ENCODE measurements at regions of chr16 and their contacts with region 1.

Region 1: DNA sequence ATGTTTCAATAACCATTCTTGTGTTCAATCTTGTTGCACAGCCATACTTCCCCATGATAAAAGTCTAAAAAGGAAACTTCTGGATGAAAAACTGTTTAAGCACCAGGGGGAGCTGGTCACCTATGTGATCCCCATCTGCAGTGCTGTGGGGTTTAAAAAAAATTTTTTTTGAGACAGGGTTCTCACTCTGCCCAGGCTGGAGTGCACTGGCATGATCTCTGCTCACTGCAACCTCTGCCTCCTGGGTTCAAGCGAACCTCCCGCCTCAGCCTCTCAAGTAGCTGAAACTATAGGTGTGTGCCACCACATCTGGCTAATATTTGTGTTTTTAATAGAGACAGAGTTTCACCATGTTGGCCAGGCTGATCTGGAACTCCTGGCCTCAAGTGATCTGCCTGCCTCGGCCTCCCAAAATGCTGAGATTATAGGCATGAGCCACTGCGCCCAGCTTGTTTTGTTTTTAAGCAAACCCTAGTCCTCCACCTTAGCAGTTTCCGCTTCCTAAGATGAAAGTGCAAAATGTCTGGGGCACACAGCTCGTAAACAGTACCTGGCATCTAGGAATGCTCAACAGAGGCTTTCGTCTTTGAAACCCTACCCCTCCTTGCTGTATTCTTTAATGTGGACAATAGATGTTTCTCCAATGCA is 25.4 kb downstream of the DNAJA2 start:
- DNase-seq: peak; percentile 37 to 64 (median 50)
- H3K4me3 ChIP-seq: no peak overlapping the region
- H3K4me3 Mint-ChIP-seq: no peak overlapping the region
- H3K27ac ChIP-seq: no peak overlapping the region
- H3K27ac Mint-ChIP-seq: peak overlapping the region in 1 of 7 donors; percentile 42
- H3K4me1 ChIP-seq: no peaks in the 10 kb centered on the region
- H3K4me1 Mint-ChIP-seq: peaks cover 6% of the 10 kb centered on the region
- H3K27me3 ChIP-seq: no peaks in the 10 kb centered on the region
- H3K27me3 Mint-ChIP-seq: peaks cover 0 to 3% (median 0%) of the 10 kb centered on the region in 3 donors
- CTCF ChIP-seq: peak; percentile 78

Region 2: DNA sequence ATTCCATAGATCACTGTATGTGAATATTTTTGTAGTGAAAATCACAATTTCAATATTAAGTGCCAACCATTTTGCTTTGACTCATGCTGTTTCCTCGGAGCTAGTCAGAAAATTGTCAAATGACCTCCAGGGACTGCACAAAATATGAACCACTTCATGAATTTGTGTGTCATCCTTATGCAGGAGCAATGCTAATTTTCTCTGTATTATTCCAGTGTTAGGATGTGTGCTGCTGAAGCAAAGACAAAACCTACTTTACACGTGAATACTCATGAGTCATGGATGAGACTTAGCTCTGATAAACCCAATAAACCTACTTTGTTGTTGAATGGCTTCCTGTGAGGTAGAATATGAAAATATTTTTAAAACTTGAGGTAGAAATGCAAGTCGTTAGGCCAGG is 392.1 kb before region 1 on chr16:
- intact Hi-C with region 1: no loop called
- DNase-seq: no peak
- H3K4me3 ChIP-seq: no peak overlapping the region
- H3K4me3 Mint-ChIP-seq: peak overlapping the region in 1 of 2 donors; percentile 42
- H3K27ac ChIP-seq: no peak overlapping the region
- H3K27ac Mint-ChIP-seq: no peak overlapping the region
- H3K4me1 ChIP-seq: no peaks in the 10 kb centered on the region
- H3K4me1 Mint-ChIP-seq: peaks cover 5% of the 10 kb centered on the region
- H3K27me3 ChIP-seq: peaks cover 0 to 16% of the 10 kb centered on the region in 2 donors
- H3K27me3 Mint-ChIP-seq: peaks cover 7 to 16% (median 11%) of the 10 kb centered on the region in 3 donors
- CTCF ChIP-seq: no peak

Region 3: DNA sequence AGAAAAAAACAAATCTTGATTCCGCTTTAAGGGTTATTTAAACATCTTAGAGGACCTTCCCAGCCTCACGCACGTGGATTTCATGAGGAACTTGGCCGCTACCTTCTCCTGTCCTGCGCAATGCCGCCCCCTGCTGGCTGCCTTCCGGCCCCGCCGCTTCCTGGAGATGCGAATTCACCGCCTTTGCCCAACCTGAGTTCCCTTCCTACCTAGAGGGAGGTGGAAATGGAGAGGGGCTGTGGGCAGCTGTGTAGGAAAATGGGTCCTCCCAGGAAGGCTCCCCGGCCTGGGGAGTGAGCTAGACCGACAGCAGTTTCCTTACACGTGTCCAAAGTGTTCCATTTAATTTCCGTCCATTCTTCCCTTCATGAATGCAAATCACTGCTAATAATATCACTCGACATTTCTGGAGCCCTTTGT is 1208.8 kb after region 1 on chr16:
- intact Hi-C with region 1: loop called (anchors 5 kb)
- DNase-seq: peak; percentile 68 to 77 (median 72)
- H3K4me3 ChIP-seq: no peak overlapping the region
- H3K4me3 Mint-ChIP-seq: no peak overlapping the region
- H3K27ac ChIP-seq: no peak overlapping the region
- H3K27ac Mint-ChIP-seq: peak overlapping the region in 1 of 7 donors; percentile 4
- H3K4me1 ChIP-seq: peaks cover 0 to 3% of the 10 kb centered on the region in 2 donors
- H3K4me1 Mint-ChIP-seq: peaks cover 7% of the 10 kb centered on the region
- H3K27me3 ChIP-seq: peaks cover 0 to 2% of the 10 kb centered on the region in 2 donors
- H3K27me3 Mint-ChIP-seq: peaks cover 8 to 22% (median 10%) of the 10 kb centered on the region in 3 donors
- CTCF ChIP-seq: peak; percentile 96

Region 4: DNA sequence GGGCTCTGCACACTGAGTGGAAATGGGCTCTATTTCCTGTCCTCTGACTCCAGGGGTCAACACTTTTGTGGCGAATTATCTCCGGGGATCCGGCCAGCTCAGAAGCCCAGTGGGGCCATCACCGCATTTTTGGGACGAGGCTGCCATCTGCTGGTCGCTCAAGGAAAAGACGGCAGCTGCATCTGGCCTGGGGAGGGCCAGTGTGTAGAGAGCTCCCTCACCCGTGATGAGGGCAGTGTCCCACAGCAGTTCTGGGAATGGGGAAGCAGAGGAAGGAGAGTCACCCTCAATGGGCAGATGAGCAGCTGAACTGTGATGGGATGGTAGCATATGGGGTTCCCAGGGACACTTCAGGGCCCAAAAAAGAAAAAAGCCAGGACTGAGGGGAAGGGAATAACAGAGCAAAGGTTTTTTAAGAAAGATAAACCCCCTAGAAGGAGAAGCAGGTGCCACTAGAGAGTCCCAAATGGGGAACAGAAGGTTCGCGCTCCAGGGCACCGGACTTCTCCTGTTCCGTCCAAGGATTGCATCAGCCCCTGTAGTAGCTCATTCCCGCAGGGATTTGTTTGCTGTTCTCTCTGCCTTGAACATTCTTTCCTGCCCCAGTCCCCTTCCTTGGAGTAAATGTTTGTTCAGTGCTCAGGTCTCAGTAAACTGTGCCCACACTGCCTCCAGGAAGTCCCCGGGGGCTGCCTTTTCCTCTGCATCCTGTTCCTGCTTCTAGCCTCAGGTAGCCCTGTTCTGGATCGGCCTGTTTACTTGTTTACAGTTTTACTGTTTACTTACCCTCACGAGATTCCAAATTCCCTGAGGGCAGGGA is 1217.1 kb after region 1 on chr16:
- intact Hi-C with region 1: loop called in 1 of 2 experiments (anchors 5 kb)
- DNase-seq: peak; percentile 68 to 78 (median 72)
- H3K4me3 ChIP-seq: no peak overlapping the region
- H3K4me3 Mint-ChIP-seq: peak overlapping the region in 1 of 2 donors; percentile 1
- H3K27ac ChIP-seq: no peak overlapping the region
- H3K27ac Mint-ChIP-seq: peak overlapping the region in 6 of 7 donors; percentile 1 to 85 (median 73)
- H3K4me1 ChIP-seq: peaks cover 24 to 27% of the 10 kb centered on the region in 2 donors
- H3K4me1 Mint-ChIP-seq: peaks cover 33% of the 10 kb centered on the region
- H3K27me3 ChIP-seq: no peaks in the 10 kb centered on the region
- H3K27me3 Mint-ChIP-seq: peaks cover 2 to 10% (median 2%) of the 10 kb centered on the region in 3 donors
- CTCF ChIP-seq: peak; percentile 91

Measured in CD14-positive monocyte (primary cell).